ENCODE measurements at regions of chr13 and their contacts with region 1.

Region 1: DNA sequence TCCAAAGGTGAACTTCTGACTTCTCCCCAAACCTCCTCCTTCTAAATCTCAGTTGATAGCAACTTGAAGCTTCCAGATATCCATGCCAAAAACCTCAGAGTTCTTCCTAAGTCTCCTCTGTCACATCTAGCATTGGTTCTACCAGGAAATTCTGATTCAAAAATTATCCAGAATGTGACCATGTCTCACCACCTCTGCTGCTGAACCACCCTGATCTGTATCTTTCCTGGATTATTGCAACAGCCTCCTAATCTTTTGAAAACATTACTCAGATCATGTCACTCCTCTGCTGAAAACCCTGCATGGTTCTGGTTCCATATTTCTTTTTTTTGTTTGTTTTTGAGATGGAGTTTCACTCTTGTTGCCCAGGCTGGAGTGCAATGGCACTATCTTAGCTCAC is 78.7 kb upstream of the TNFSF11 start:
- DNase-seq: no peak

Region 2: GRCh38 chr13:42328672-42329071 is 166.6 kb before region 1 on chr13:
- intact Hi-C with region 1: no loop called
- DNase-seq: no peak

Region 3: GRCh38 chr13:42524487-42525034 is 29.3 kb after region 1 on chr13:
- intact Hi-C with region 1: loop called in 1 of 2 experiments (anchors 1 kb)
- DNase-seq: no peak

Measured in posterior vena cava (tissue), 2 donors.